Activated B cell treated with CpG ODN at 0.5 μM for 24 hours (primary cell): ENCODE measurements at regions of chr2 and their contacts with region 1.

Region 1: GRCh38 chr2:142989273-142990204 is 112.1 kb downstream of the KYNU start:
- DNase-seq: no peak
- ATAC-seq: peak; percentile 28
- H3K4me3 Mint-ChIP-seq: no peak overlapping the region
- H3K27ac Mint-ChIP-seq: no peak overlapping the region
- H3K4me1 Mint-ChIP-seq: peaks cover 5% of the 10 kb centered on the region
- H3K27me3 Mint-ChIP-seq: no peaks in the 10 kb centered on the region
- CTCF ChIP-seq: peak; percentile 92

Region 2: GRCh38 chr2:142130111-142131009 is 859.2 kb before region 1 on chr2:
- CTCF ChIA-PET with region 1: no interaction called
- POLR2A ChIA-PET with region 1: no interaction called
- intact Hi-C with region 1: loop called (anchors 10 kb)
- DNase-seq: no peak
- ATAC-seq: no peak
- H3K4me3 Mint-ChIP-seq: peak overlapping the region; percentile 75
- H3K27ac Mint-ChIP-seq: no peak overlapping the region
- H3K4me1 Mint-ChIP-seq: peaks cover 21% of the 10 kb centered on the region
- H3K27me3 Mint-ChIP-seq: peaks cover 41% of the 10 kb centered on the region
- CTCF ChIP-seq: no peak

Region 3: GRCh38 chr2:142682528-142682927 is 307.0 kb before region 1 on chr2:
- CTCF ChIA-PET with region 1: interaction called, 14 read pairs
- POLR2A ChIA-PET with region 1: no interaction called
- intact Hi-C with region 1: loop called (anchors 1 kb)
- DNase-seq: no peak
- ATAC-seq: no peak
- H3K4me3 Mint-ChIP-seq: no peak overlapping the region
- H3K27ac Mint-ChIP-seq: no peak overlapping the region
- H3K4me1 Mint-ChIP-seq: no peaks in the 10 kb centered on the region
- H3K27me3 Mint-ChIP-seq: peaks cover 9% of the 10 kb centered on the region
- CTCF ChIP-seq: no peak